GM12878 (cell line): ENCODE measurements at regions of chr4 and their contacts with region 1.

Region 1: GRCh38 chr4:77203380-77204197 is 46.6 kb downstream of the CCNG2 start:
- DNase-seq: peak; percentile 23
- ATAC-seq: peak; percentile 95
- H3K4me3 ChIP-seq: no peak overlapping the region
- H3K27ac ChIP-seq: no peak overlapping the region
- H3K4me1 ChIP-seq: no peaks in the 10 kb centered on the region
- H3K27me3 ChIP-seq: peaks cover 0 to 3% of the 10 kb centered on the region in 2 experiments; a peak in 1 of 4 replicates
- CTCF ChIP-seq: peak; percentile 68 to 93 (median 84)
- EP300 ChIP-seq: no peak
- POLR2A ChIP-seq: no peak
- RAD21 ChIP-seq: peak; percentile 95

Region 2: GRCh38 chr4:77025643-77026321 is 177.8 kb before region 1 on chr4:
- CTCF ChIA-PET with region 1: no interaction called
- POLR2A ChIA-PET with region 1: no interaction called
- RAD21 ChIA-PET with region 1: no interaction called
- SMC1A ChIA-PET with region 1: no interaction called
- in situ Hi-C with region 1: no loop called
- intact Hi-C with region 1: no loop called
- DNase-seq: peak; percentile 7
- ATAC-seq: peak; percentile 88
- H3K4me3 ChIP-seq: no peak overlapping the region
- H3K27ac ChIP-seq: no peak overlapping the region
- H3K4me1 ChIP-seq: peaks cover 6% of the 10 kb centered on the region
- H3K27me3 ChIP-seq: no peaks in the 10 kb centered on the region
- CTCF ChIP-seq: no peak
- EP300 ChIP-seq: no peak
- POLR2A ChIP-seq: no peak
- RAD21 ChIP-seq: no peak

Region 3: GRCh38 chr4:77044461-77045150 is 159.0 kb before region 1 on chr4:
- CTCF ChIA-PET with region 1: interaction called, 258 read pairs
- POLR2A ChIA-PET with region 1: interaction called, 8 read pairs
- RAD21 ChIA-PET with region 1: interaction called, 56 read pairs
- SMC1A ChIA-PET with region 1: interaction called, 42 read pairs
- in situ Hi-C with region 1: no loop called
- intact Hi-C with region 1: no loop called
- DNase-seq: peak; percentile 8
- ATAC-seq: peak; percentile 69
- H3K4me3 ChIP-seq: no peak overlapping the region
- H3K27ac ChIP-seq: no peak overlapping the region
- H3K4me1 ChIP-seq: no peaks in the 10 kb centered on the region
- H3K27me3 ChIP-seq: no peaks in the 10 kb centered on the region
- CTCF ChIP-seq: peak; percentile 51 to 71 (median 65)
- EP300 ChIP-seq: no peak
- POLR2A ChIP-seq: no peak
- RAD21 ChIP-seq: peak; percentile 50

Region 4: DNA sequence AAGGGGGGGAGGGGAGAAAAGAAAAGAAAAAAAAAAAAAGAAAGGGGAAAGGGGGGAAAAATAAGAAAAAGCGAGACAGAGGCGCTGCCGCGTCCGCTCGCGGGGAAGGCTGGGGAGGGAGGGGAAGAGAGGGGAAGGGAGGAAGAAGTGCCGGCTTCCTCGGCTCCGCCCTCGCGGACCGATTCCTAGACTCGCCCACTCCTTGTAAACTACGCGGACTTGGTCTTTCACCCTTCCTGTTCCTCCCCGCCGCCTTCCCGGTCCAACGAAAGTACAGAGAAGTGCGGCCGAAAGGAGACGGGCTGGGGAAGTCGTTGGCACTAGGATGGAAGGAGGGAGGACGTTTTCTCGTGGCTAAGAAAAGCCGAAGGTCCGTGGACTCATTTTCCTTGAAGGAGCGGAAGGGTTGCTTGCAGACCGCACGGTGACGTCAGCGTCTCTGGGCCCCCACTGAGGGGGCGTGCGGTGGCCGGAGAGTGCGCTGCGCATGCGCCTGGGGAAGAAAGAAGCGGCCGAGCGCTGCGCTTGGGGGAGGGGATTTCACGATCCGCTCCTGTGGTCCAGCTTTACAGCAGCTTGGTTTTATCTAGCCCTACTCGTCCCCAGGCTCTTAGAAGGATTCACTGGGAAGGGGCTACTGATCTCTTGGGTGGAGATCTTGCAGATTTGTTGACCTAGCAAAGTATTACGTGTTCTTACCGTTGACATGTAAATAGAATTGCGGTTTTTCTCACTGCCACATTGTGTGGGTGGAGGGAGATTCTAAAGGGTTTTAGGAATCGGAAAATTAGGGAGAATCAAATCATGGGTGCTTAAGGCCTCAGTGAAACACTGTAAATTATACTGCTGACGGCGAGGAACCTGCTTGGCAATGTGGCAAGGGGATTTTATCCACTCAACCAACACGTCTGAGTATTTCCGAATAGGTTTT is 127.5 kb before region 1 on chr4 and contains the start of gene CCNI:
- CTCF ChIA-PET with region 1: interaction called, 30 read pairs
- POLR2A ChIA-PET with region 1: interaction called, 4 read pairs
- RAD21 ChIA-PET with region 1: interaction called, 24 read pairs
- SMC1A ChIA-PET with region 1: interaction called, 44 read pairs
- in situ Hi-C with region 1: no loop called
- intact Hi-C with region 1: no loop called
- DNase-seq: peak; percentile 92
- ATAC-seq: peak; percentile 77
- H3K4me3 ChIP-seq: peak within 1 kb of the TSS; percentile 97
- H3K27ac ChIP-seq: peak within 1 kb of the TSS; percentile 100
- H3K4me1 ChIP-seq: 0 out of 2 replicates have a peak, but pooled peaks cover 3% of the 10 kb centered on the region
- H3K27me3 ChIP-seq: no peaks in the 10 kb centered on the region
- CTCF ChIP-seq: no peak
- EP300 ChIP-seq: peak; percentile 4 to 78; a peak in 3 of 4 replicates
- POLR2A ChIP-seq: peak; percentile 82
- RAD21 ChIP-seq: no peak
- polyA plus RNA-seq, gene CCNI: 72.4 to 82.4 TPM

Region 5: DNA sequence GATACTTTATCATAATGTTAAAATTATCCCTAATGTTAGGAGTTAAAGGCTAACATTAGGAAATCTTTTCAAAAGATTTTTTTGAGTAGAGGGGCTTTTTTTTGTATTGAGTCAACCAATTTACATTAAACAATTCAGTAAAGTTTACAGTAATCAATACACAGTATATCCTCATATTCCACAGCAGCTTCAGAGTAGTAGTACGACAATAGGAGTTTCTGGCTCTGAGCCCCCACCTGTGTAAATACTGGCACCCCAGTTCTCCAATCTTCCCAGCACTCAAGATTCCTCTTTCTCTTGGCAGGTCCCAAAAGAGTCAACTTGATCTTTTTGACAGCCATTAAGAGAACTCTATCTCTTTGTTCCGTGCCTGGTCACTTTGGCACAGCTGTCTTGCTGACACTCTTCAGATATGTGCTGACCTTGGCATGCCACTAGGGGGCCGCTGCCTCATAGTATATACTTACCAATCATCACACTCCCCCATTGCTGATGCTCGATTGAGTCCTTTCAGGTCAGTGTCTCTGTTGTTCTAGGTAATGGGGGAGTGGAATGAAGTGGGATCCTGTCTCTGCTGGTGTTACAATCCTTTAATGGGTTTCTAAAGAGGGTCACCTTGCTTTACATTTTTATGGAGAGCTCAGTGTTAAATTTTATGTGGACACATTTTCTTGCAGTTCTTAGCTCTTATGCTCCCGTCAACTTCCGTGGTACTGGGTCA is 108.3 kb before region 1 on chr4:
- CTCF ChIA-PET with region 1: interaction called, 535 read pairs
- POLR2A ChIA-PET with region 1: interaction called, 3 read pairs
- RAD21 ChIA-PET with region 1: interaction called, 229 read pairs
- SMC1A ChIA-PET with region 1: interaction called, 286 read pairs
- in situ Hi-C with region 1: loop called (anchors 5 kb)
- intact Hi-C with region 1: loop called (anchors 1 kb)
- DNase-seq: no peak
- ATAC-seq: peak; percentile 100
- H3K4me3 ChIP-seq: no peak overlapping the region
- H3K27ac ChIP-seq: no peak overlapping the region
- H3K4me1 ChIP-seq: no peaks in the 10 kb centered on the region
- H3K27me3 ChIP-seq: no peaks in the 10 kb centered on the region
- CTCF ChIP-seq: peak; percentile 86 to 95 (median 91)
- EP300 ChIP-seq: no peak
- POLR2A ChIP-seq: no peak
- RAD21 ChIP-seq: peak; percentile 80

Region 6: DNA sequence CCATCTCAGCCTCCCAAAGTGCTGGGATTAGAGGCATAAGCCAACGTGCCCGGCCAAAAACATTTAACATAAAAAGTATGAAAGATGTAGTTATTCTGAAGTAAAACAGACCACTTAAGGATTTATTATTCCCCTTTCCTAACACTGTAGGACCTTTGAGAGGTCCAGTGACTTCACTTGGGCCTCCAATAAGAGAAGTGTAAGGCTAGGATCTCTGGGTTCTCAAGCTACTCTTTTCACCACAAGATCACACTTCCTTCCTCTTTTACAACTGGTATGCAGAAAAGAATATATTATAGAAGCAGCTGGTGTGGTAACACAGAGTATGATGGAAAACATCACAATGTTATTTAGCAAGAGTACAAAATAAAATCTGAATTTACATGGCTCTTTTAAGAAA is 76.8 kb before region 1 on chr4:
- CTCF ChIA-PET with region 1: interaction called, 60 read pairs
- POLR2A ChIA-PET with region 1: no interaction called
- RAD21 ChIA-PET with region 1: interaction called, 46 read pairs
- SMC1A ChIA-PET with region 1: interaction called, 72 read pairs
- in situ Hi-C with region 1: no loop called
- intact Hi-C with region 1: no loop called
- DNase-seq: no peak
- ATAC-seq: peak; percentile 78
- H3K4me3 ChIP-seq: no peak overlapping the region
- H3K27ac ChIP-seq: no peak overlapping the region
- H3K4me1 ChIP-seq: peaks cover 6% of the 10 kb centered on the region; the same call in 1 of the 2 replicates
- H3K27me3 ChIP-seq: no peaks in the 10 kb centered on the region
- CTCF ChIP-seq: no peak
- EP300 ChIP-seq: no peak
- POLR2A ChIP-seq: no peak
- RAD21 ChIP-seq: no peak

Region 7: GRCh38 chr4:77183777-77184420 is 19.7 kb before region 1 on chr4:
- CTCF ChIA-PET with region 1: interaction called, 49 read pairs
- POLR2A ChIA-PET with region 1: interaction called, 5 read pairs
- RAD21 ChIA-PET with region 1: interaction called, 8 read pairs
- SMC1A ChIA-PET with region 1: interaction called, 20 read pairs
- in situ Hi-C with region 1: no loop called
- intact Hi-C with region 1: no loop called
- DNase-seq: no peak
- ATAC-seq: no peak
- H3K4me3 ChIP-seq: no peak overlapping the region
- H3K27ac ChIP-seq: no peak overlapping the region
- H3K4me1 ChIP-seq: no peaks in the 10 kb centered on the region
- H3K27me3 ChIP-seq: peaks cover 0 to 5% of the 10 kb centered on the region in 2 experiments; a peak in 2 of 4 replicates
- CTCF ChIP-seq: no peak
- EP300 ChIP-seq: no peak
- POLR2A ChIP-seq: no peak
- RAD21 ChIP-seq: no peak